ENCODE measurements at regions of chr10 and their contacts with region 1.

Region 1: DNA sequence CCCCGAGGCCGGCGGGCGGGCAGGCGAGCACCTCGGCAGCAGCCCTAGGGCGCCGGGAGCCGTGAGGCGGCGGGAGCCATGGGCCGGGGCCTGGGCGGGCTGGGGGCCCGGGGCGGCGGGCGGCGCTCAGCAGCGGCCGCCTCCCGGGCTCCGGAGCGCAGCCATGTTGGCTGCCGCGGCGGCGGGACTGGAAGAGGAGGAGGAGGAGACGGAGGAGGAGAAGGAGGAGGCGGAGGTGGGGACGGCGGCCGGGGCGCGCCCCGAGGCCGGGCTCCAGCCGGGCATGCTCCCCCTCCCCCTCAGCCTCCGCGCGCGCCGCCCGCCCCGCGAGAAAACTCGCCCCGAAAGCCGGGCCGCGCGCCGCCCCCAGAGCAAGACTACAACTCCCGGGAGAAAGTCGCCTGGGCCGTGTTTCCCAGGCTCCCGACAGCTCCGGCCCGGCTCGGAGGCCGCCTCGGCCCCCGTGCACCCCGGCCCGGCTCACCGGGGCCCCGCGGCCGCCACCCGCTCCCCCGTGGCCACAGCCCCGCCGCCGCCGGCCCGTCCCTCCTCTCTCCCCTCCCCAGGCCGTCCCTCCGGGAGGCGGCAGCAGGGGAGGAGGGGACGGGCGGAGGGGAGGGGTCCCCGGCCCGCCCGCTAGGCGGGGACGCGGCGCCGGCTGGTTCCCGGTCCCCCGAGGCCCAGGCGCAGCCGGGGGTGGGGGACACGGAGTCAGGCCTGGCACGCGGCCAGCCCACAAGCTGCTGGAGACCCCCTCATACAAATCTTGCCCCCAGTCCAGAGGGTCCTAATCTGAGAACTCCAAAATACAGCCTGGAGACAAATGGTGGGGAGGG is at the start of gene DLG5:
- DNase-seq: peak; percentile 92
- H3K4me3 ChIP-seq: peak within 1 kb of the TSS; percentile 64 to 87 (median 74)
- H3K27ac ChIP-seq: peak within 1 kb of the TSS; percentile 88 to 95 (median 91)
- H3K4me1 ChIP-seq: peaks cover 0 to 54% (median 42%) of the 10 kb centered on the region in 4 donors
- H3K27me3 ChIP-seq: no peaks in the 10 kb centered on the region
- CTCF ChIP-seq: no peak
- EP300 ChIP-seq: no peak
- POLR2A ChIP-seq: no peak
- total RNA-seq, gene DLG5: 41.0 to 78.1 (median 49.4) TPM

Region 2: GRCh38 chr10:77072836-77073662 is 853.7 kb before region 1 on chr10:
- intact Hi-C with region 1: no loop called
- DNase-seq: peak; percentile 96
- H3K4me3 ChIP-seq: no peak overlapping the region
- H3K27ac ChIP-seq: peak overlapping the region; percentile 20 to 82 (median 72)
- H3K4me1 ChIP-seq: peaks cover 0 to 54% (median 38%) of the 10 kb centered on the region in 4 donors
- H3K27me3 ChIP-seq: no peaks in the 10 kb centered on the region
- CTCF ChIP-seq: no peak
- EP300 ChIP-seq: peak; percentile 78 to 97 (median 90)
- POLR2A ChIP-seq: no peak

Region 3: GRCh38 chr10:77837240-77837924 is 89.4 kb before region 1 on chr10:
- intact Hi-C with region 1: no loop called
- DNase-seq: peak; percentile 81
- H3K4me3 ChIP-seq: no peak overlapping the region
- H3K27ac ChIP-seq: peak overlapping the region in 3 of 4 donors; percentile 77 to 80 (median 78)
- H3K4me1 ChIP-seq: peaks cover 0 to 30% (median 22%) of the 10 kb centered on the region in 4 donors
- H3K27me3 ChIP-seq: no peaks in the 10 kb centered on the region
- CTCF ChIP-seq: no peak
- EP300 ChIP-seq: no peak
- POLR2A ChIP-seq: no peak

Region 4: DNA sequence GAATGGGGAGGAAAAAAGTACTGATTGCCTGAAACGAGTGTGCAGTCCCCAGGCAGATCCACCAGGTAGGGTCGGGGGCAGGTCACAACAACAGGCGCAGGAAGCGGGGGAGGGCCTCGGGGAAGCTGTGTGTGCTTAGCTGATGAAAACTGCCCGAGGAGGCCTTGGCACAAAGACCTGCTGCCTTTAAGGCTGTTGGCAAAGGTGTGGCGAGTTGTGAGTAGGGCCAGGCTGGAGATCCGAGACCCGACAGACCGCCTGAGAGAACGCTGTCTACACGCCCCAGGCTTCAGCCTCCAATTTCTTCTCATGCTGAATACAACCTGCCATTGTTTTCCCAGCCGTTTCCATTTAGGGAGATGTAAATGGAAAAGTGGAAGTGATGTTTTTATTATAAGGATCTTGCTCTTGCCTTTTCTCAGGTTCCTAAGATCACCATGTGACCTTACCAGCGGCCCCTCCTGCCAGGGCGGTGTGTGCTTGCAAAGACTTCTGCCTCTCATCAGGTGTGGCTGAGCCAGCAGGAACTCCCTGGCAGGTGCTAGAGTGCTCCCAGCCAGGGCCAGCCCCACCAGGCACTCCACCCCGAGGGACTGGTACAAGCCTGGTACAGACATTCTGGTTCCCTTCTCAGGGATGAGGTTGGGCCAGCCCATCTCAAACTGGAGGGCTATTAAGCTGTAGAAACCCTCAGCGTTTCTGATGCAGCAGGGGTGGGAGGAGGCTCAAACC is 61.0 kb before region 1 on chr10:
- intact Hi-C with region 1: loop called (anchors 5 kb)
- DNase-seq: no peak
- H3K4me3 ChIP-seq: no peak overlapping the region
- H3K27ac ChIP-seq: peak overlapping the region; percentile 51 to 91 (median 68)
- H3K4me1 ChIP-seq: peaks cover 0 to 83% (median 67%) of the 10 kb centered on the region in 4 donors
- H3K27me3 ChIP-seq: no peaks in the 10 kb centered on the region
- CTCF ChIP-seq: no peak
- EP300 ChIP-seq: peak in 1 of 4 donors; percentile 62
- POLR2A ChIP-seq: no peak

Region 5: DNA sequence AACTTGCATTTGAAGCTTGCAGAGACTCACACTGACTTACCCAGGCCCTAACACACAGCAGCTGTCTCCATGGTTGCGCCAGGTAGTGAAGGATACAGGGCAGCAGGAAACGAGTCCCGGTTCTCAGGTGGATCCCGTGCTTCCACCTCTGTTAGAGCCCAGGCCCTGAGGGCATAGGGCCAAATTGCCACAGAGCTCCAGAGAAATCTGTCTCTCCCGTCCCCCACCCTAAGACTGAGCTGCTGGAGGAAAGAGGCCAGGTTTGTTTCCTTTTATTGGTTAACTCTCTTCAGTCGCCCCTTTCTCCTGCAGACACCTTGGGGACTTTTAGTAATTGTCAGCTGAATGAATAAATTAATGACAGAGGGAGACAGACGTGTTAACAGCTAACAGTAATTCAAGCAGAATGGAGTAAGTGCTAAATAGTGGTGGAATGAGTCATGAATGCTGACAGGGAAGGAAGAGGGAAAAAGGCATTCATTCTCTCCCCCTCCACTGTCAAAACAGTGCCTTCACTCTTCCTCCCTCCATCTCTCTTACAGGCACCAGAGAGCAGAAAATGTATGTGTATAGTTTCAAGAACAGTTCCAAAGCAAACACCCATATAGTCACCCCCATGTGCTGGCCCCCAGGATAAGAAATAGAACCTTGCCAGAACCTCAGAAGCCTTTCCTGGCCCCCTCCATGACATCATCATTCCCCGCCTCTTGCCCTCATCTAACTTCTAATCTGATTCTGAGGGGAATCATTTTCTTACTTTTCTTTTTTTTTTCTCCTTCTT is 16.5 kb after region 1 on chr10:
- intact Hi-C with region 1: no loop called
- DNase-seq: peak; percentile 72
- H3K4me3 ChIP-seq: no peak overlapping the region
- H3K27ac ChIP-seq: peak overlapping the region in 3 of 4 donors; percentile 40 to 69 (median 58)
- H3K4me1 ChIP-seq: peaks cover 0 to 28% (median 20%) of the 10 kb centered on the region in 4 donors
- H3K27me3 ChIP-seq: no peaks in the 10 kb centered on the region
- CTCF ChIP-seq: no peak
- EP300 ChIP-seq: no peak
- POLR2A ChIP-seq: no peak

Region 6: GRCh38 chr10:77970869-77971803 is 44.4 kb after region 1 on chr10:
- intact Hi-C with region 1: loop called (anchors 2 kb)
- DNase-seq: peak; percentile 97
- H3K4me3 ChIP-seq: peak overlapping the region in 1 of 4 donors; percentile 14
- H3K27ac ChIP-seq: peak overlapping the region; percentile 79 to 93 (median 90)
- H3K4me1 ChIP-seq: peaks cover 0 to 62% (median 56%) of the 10 kb centered on the region in 4 donors
- H3K27me3 ChIP-seq: no peaks in the 10 kb centered on the region
- CTCF ChIP-seq: no peak
- EP300 ChIP-seq: peak; percentile 96 to 99 (median 97)
- POLR2A ChIP-seq: no peak

Region 7: DNA sequence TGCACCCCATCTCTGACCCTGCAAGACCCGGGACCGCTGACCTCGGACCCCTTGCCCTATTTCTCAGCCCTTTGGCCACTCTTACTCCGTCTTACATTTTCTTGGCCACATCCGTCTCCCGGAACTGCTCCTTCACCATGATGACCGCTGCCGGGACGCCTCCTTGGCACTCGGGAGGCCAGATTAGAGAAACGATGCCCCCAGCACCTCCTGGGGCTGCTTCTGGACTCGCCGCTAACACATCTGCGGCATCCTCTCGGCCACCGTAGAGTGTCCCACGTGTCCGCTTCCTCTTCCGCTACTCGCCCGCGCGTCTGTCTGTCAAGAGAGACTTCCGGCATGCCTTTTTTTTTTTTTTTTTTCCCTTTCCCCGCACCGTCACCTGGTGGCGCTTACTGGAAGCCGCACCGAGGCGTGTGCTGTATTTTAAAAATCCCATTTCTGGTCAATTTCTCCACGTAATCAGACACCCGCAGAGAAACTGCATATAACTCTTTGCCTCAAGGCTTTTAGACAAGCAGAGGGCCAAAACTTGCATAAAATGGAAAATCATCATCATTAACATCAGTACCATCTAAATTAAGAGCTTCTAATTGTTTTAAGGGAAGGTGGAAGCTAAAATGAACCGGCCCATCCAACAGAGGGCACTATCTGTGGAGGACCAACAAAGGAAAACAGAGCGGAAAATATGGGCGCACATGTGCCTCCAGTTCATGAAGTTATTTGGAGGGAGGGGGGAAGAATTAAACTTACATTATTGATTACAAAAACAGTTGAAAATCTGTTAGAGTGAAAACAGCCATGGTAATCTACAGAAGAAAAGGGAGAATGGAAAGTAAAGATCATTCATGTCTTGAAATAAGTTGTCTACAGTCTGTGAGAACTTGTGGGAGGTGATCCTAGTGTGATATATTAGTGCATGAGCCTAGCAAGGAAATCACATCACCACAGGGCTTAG is 102.8 kb after region 1 on chr10 and contains the start of gene POLR3A:
- intact Hi-C with region 1: loop called (anchors 5 kb)
- DNase-seq: peak; percentile 99
- H3K4me3 ChIP-seq: peak within 1 kb of the TSS; percentile 60 to 98 (median 80)
- H3K27ac ChIP-seq: peak within 1 kb of the TSS; percentile 81 to 88 (median 86)
- H3K4me1 ChIP-seq: peaks cover 0 to 35% (median 24%) of the 10 kb centered on the region in 4 donors
- H3K27me3 ChIP-seq: no peaks in the 10 kb centered on the region
- CTCF ChIP-seq: peak; percentile 78 to 91 (median 80)
- EP300 ChIP-seq: no peak
- POLR2A ChIP-seq: peak; percentile 23 to 33
- total RNA-seq, gene POLR3A: 9.6 to 13.0 (median 11.0) TPM

Measured in sigmoid colon (tissue), 7 donors.